HepG2 (cell line): ENCODE measurements at regions of chr18 and their contacts with region 1.

Region 1: DNA sequence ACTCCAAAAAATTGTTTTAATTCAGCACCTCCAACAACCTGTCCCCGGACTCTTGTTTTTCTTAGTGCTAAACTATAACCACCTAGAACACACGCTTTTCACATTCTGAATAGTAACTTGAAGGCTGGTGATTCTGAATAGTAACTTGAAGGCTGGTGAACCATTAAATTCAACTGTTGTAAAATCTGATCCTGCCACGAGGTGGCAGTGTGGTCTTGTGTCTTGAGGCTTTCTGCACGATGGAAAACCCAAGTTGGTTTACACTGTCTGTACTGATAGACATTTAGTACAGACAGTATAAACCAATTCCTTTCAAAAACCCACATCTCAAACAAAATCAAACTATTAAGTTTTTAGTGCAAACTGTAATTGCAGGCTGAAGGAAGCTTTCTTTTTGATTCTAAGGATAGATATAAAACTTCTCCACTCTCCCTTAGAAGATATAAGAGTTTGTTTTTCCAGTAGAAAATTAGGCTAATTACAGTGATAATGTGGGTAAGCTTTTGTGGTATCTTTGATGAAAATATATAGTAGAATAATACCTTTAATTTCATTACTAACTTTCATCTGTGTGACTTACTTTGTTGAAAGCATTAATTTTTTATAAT is 57.6 kb downstream of the VAPA start:
- DNase-seq: peak; percentile 64
- ATAC-seq: peak; percentile 48
- H3K4me3 ChIP-seq: no peak overlapping the region
- H3K27ac ChIP-seq: no peak overlapping the region
- H3K4me1 ChIP-seq: no peaks in the 10 kb centered on the region
- H3K27me3 ChIP-seq: no peaks in the 10 kb centered on the region
- CTCF ChIP-seq: peak; percentile 88
- EP300 ChIP-seq: no peak
- POLR2A ChIP-seq: no peak
- RAD21 ChIP-seq: peak; percentile 80

Region 2: GRCh38 chr18:10036479-10036878 is 65.1 kb after region 1 on chr18:
- CTCF ChIA-PET with region 1: no interaction called
- POLR2A ChIA-PET with region 1: no interaction called
- in situ Hi-C with region 1: no loop called
- intact Hi-C with region 1: loop called (anchors 2 kb)
- DNase-seq: no peak
- ATAC-seq: no peak
- H3K4me3 ChIP-seq: no peak overlapping the region
- H3K27ac ChIP-seq: no peak overlapping the region
- H3K4me1 ChIP-seq: 0 out of 2 replicates have a peak, but pooled peaks cover 6% of the 10 kb centered on the region
- H3K27me3 ChIP-seq: no peaks in the 10 kb centered on the region
- CTCF ChIP-seq: no peak
- EP300 ChIP-seq: no peak
- POLR2A ChIP-seq: no peak
- RAD21 ChIP-seq: no peak

Region 3: GRCh38 chr18:10519999-10520935 is 548.9 kb after region 1 on chr18:
- CTCF ChIA-PET with region 1: interaction called, 27 read pairs
- POLR2A ChIA-PET with region 1: no interaction called
- in situ Hi-C with region 1: loop called (anchors 5 kb)
- intact Hi-C with region 1: loop called (anchors 1 kb)
- DNase-seq: peak; percentile 76
- ATAC-seq: peak; percentile 90
- H3K4me3 ChIP-seq: no peak overlapping the region
- H3K27ac ChIP-seq: no peak overlapping the region
- H3K4me1 ChIP-seq: peaks cover 31% of the 10 kb centered on the region
- H3K27me3 ChIP-seq: peaks cover 0 to 14% of the 10 kb centered on the region in 2 experiments; a peak in 3 of 5 replicates
- CTCF ChIP-seq: peak; percentile 91
- EP300 ChIP-seq: no peak
- POLR2A ChIP-seq: no peak
- RAD21 ChIP-seq: peak; percentile 87